H1 (cell line): ENCODE measurements at regions of chr11 and their contacts with region 1.

Region 1: DNA sequence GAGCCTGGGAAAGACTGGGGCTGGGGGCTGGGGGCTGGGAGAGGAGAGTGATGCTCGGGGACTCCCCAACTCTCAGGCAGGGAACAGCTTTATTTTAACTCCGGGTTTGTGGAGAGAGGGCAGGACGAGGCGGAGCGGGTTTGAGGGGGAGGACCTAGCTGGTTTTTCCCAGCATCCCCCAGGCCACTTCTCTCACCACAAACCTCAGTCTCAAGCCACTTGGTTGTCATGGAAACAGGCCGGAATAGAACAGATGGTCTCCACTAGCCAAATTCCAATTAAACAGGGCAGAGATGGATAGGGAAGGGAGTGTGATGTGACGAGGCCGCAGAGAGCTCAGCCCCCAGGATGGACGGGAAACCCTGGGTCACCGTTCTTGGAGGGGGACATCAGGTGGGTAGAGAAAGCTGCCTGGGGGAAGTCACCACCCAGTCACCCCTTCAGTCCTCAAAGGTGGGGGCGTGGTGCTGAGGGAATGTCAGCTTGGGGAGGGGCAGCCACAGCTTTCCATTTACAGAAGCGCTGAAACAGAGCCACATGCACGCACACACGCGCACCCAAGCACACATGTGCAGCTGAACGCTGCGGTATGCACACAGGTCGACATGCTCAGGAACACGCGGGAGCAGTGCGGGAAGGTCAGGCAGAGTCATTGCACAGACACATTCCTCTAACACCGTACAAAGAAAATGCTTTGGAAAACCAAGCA is 19.2 kb downstream of the NECTIN1 start:
- DNase-seq: no peak
- H3K4me3 ChIP-seq: no peak overlapping the region
- H3K27ac ChIP-seq: no peak overlapping the region
- H3K4me1 ChIP-seq: peaks cover 0 to 33% (median 13%) of the 10 kb centered on the region in 4 experiments; a peak in 6 of 7 replicates
- H3K27me3 ChIP-seq: no peaks in the 10 kb centered on the region
- CTCF ChIP-seq: no peak
- EP300 ChIP-seq: no peak
- POLR2A ChIP-seq: no peak
- RAD21 ChIP-seq: no peak

Region 2: GRCh38 chr11:119666463-119667131 is 43.2 kb before region 1 on chr11:
- CTCF ChIA-PET with region 1: interaction called, 10 read pairs
- POLR2A ChIA-PET with region 1: no interaction called
- DNase-seq: peak; percentile 69 to 92
- H3K4me3 ChIP-seq: no peak overlapping the region
- H3K27ac ChIP-seq: no peak overlapping the region
- H3K4me1 ChIP-seq: peaks cover 2 to 19% (median 15%) of the 10 kb centered on the region in 4 experiments; a peak in 6 of 7 replicates
- H3K27me3 ChIP-seq: no peaks in the 10 kb centered on the region
- CTCF ChIP-seq: peak; percentile 92 to 99 (median 96)
- EP300 ChIP-seq: no peak
- POLR2A ChIP-seq: no peak
- RAD21 ChIP-seq: peak; percentile 99

Region 3: GRCh38 chr11:119673759-119674336 is 35.9 kb before region 1 on chr11:
- CTCF ChIA-PET with region 1: interaction called, 53 read pairs
- POLR2A ChIA-PET with region 1: no interaction called
- DNase-seq: no peak
- H3K4me3 ChIP-seq: no peak overlapping the region
- H3K27ac ChIP-seq: no peak overlapping the region
- H3K4me1 ChIP-seq: no peaks in the 10 kb centered on the region; a peak in 3 of 7 replicates
- H3K27me3 ChIP-seq: no peaks in the 10 kb centered on the region
- CTCF ChIP-seq: no peak
- EP300 ChIP-seq: no peak
- POLR2A ChIP-seq: no peak
- RAD21 ChIP-seq: no peak

Region 4: GRCh38 chr11:119684361-119685110 is 25.3 kb before region 1 on chr11:
- CTCF ChIA-PET with region 1: interaction called, 110 read pairs
- POLR2A ChIA-PET with region 1: no interaction called
- DNase-seq: no peak
- H3K4me3 ChIP-seq: no peak overlapping the region
- H3K27ac ChIP-seq: no peak overlapping the region
- H3K4me1 ChIP-seq: peaks cover 9 to 45% (median 32%) of the 10 kb centered on the region in 4 experiments
- H3K27me3 ChIP-seq: no peaks in the 10 kb centered on the region
- CTCF ChIP-seq: no peak
- EP300 ChIP-seq: no peak
- POLR2A ChIP-seq: no peak
- RAD21 ChIP-seq: no peak

Region 5: DNA sequence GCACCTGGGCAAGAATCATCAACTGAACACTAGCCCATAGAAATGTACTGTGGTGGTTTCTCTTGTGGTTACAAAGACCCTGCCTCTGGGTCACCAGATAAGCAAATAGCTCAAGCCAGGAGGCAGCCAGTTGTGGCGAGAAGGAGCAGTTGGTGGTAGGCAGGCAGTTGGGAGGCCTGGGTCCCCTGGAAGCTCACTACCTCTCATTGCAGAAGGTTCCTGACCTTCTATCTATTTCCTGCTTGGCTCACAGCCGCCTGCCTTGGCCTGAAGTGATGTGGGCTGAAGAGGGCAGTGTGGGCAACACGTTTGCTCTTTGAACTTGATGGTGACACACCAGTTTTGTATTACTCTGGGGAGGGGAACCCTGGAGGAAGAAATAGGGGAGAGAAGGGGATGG is 15.5 kb before region 1 on chr11:
- CTCF ChIA-PET with region 1: interaction called, 110 read pairs
- POLR2A ChIA-PET with region 1: no interaction called
- DNase-seq: no peak
- H3K4me3 ChIP-seq: no peak overlapping the region
- H3K27ac ChIP-seq: no peak overlapping the region
- H3K4me1 ChIP-seq: peaks cover 10 to 68% (median 46%) of the 10 kb centered on the region in 4 experiments
- H3K27me3 ChIP-seq: no peaks in the 10 kb centered on the region
- CTCF ChIP-seq: peak in 2 of 3 experiments; percentile 6 to 30; a peak in 2 of 4 replicates
- EP300 ChIP-seq: no peak
- POLR2A ChIP-seq: no peak
- RAD21 ChIP-seq: peak in 1 of 2 experiments; percentile 25; a peak in 2 of 4 replicates